Activated CD4-positive, alpha-beta memory T cell treated with anti-CD3 and anti-CD28 coated beads, Interleukin-2, amount 10 ng/mL, durations not matched to agents 7 days and 5 days (primary cell): ENCODE measurements at regions of chr12 and their contacts with region 1.

Region 1: DNA sequence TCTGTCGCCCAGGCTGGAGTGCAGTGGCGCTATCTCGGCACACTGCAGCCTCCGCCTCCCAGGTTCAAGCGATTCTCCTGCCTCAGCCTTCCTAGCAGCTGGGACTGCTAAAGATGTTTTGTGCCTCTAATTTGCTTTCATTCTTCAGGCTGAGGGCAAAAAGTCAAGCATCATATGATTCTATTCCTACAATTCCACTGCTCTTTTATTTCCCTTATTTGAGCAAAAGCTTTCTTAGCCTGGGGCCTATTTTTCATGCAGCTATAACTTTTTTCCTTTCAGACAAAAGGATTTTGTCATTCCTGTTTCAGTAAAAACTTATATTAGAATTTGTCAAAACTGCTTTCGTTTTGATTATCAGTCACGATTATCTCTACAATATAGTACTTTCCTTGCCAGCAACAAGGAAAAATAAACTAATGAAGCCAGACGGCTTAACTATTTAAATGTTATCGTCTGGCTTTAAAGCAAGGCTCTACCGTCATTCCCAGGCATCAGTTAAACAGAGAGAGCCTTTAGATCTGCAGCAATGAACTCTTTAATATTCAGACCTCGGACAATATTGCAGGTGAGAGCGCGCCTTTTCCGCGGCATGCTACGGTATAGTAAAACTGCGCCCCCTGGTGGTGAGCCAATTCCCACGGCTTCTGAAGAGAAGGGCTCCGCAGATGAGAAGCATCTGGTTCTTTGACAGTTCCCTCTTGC is 1.4 kb upstream of the SLC2A13 start:
- DNase-seq: peak; percentile 87
- H3K4me3 Mint-ChIP-seq: peak overlapping the region; percentile 57
- H3K27ac Mint-ChIP-seq: no peak overlapping the region
- H3K4me1 Mint-ChIP-seq: peaks cover 27% of the 10 kb centered on the region
- H3K27me3 Mint-ChIP-seq: peaks cover 35% of the 10 kb centered on the region

Region 2: GRCh38 chr12:40010899-40011774 is 96.1 kb before region 1 on chr12:
- CTCF ChIA-PET with region 1: interaction called, 55 read pairs
- POLR2A ChIA-PET with region 1: interaction called, 4 read pairs
- DNase-seq: peak; percentile 45
- H3K4me3 Mint-ChIP-seq: peak overlapping the region; percentile 45
- H3K27ac Mint-ChIP-seq: no peak overlapping the region
- H3K4me1 Mint-ChIP-seq: peaks cover 14% of the 10 kb centered on the region
- H3K27me3 Mint-ChIP-seq: no peaks in the 10 kb centered on the region

Region 3: DNA sequence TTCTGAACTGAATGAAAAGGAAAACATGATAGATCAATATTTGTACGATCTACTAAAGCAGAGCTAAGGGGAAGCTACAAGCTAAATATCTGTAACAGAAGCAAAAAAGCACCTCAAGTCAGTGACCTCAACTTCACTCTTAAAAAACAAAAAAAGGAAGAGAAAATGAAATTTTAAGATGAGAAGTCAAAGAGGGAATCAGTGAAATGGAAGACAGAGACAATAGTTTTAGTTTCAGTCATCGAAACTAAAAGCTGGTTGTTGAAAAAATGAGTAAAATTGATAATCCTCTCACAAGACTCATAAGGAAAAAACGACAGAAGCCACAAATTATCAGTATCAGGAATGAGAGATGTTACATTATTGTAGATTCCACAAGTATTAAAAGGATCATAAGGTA is 10.6 kb after region 1 on chr12:
- CTCF ChIA-PET with region 1: interaction called, 17 read pairs
- POLR2A ChIA-PET with region 1: no interaction called
- DNase-seq: no peak
- H3K4me3 Mint-ChIP-seq: no peak overlapping the region
- H3K27ac Mint-ChIP-seq: no peak overlapping the region
- H3K4me1 Mint-ChIP-seq: peaks cover 6% of the 10 kb centered on the region
- H3K27me3 Mint-ChIP-seq: peaks cover 28% of the 10 kb centered on the region